Activated CD4-positive, alpha-beta memory T cell treated with anti-CD3 and anti-CD28 coated beads for 36 hours (primary cell): ENCODE measurements at regions of chr6 and their contacts with region 1.

Region 1: GRCh38 chr6:99330159-99330558 is 19.3 kb downstream of the FAXC start:
- DNase-seq: peak; percentile 73
- H3K4me3 Mint-ChIP-seq: no peak overlapping the region
- H3K27ac Mint-ChIP-seq: no peak overlapping the region
- H3K4me1 Mint-ChIP-seq: peaks cover 3% of the 10 kb centered on the region
- H3K27me3 Mint-ChIP-seq: peaks cover 5% of the 10 kb centered on the region

Region 2: GRCh38 chr6:99364026-99364425 is 33.9 kb after region 1 on chr6:
- CTCF ChIA-PET with region 1: interaction called, 5 read pairs
- POLR2A ChIA-PET with region 1: no interaction called
- intact Hi-C with region 1: loop called (anchors 1 kb)
- DNase-seq: peak; percentile 11
- H3K4me3 Mint-ChIP-seq: no peak overlapping the region
- H3K27ac Mint-ChIP-seq: no peak overlapping the region
- H3K4me1 Mint-ChIP-seq: peaks cover 16% of the 10 kb centered on the region
- H3K27me3 Mint-ChIP-seq: peaks cover 21% of the 10 kb centered on the region

Region 3: DNA sequence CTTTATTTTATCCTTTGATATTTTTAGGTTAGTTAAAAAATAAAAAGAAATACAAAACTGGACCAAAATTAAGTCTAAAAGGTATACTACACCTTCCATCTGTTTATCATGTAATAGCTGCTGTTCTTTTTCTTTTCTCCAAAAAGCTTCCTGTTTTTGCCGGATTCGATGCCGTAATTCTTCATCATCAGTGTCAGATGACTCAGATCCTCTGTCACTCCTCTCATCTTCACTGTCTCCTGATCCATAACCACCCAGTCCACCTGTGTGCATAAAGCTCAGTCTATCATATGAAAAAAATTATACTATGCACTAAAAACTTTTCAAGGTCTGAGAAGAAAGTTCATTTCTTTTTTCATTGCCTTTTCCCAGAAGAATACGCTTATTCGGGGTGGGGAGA is 72.3 kb after region 1 on chr6:
- CTCF ChIA-PET with region 1: interaction called, 16 read pairs
- POLR2A ChIA-PET with region 1: no interaction called
- intact Hi-C with region 1: no loop called
- DNase-seq: no peak
- H3K4me3 Mint-ChIP-seq: no peak overlapping the region
- H3K27ac Mint-ChIP-seq: no peak overlapping the region
- H3K4me1 Mint-ChIP-seq: no peaks in the 10 kb centered on the region
- H3K27me3 Mint-ChIP-seq: no peaks in the 10 kb centered on the region

Region 4: GRCh38 chr6:99434702-99435530 is 104.8 kb after region 1 on chr6:
- CTCF ChIA-PET with region 1: interaction called, 19 read pairs
- POLR2A ChIA-PET with region 1: no interaction called
- intact Hi-C with region 1: no loop called
- DNase-seq: no peak
- H3K4me3 Mint-ChIP-seq: no peak overlapping the region
- H3K27ac Mint-ChIP-seq: no peak overlapping the region
- H3K4me1 Mint-ChIP-seq: no peaks in the 10 kb centered on the region
- H3K27me3 Mint-ChIP-seq: no peaks in the 10 kb centered on the region

Region 5: DNA sequence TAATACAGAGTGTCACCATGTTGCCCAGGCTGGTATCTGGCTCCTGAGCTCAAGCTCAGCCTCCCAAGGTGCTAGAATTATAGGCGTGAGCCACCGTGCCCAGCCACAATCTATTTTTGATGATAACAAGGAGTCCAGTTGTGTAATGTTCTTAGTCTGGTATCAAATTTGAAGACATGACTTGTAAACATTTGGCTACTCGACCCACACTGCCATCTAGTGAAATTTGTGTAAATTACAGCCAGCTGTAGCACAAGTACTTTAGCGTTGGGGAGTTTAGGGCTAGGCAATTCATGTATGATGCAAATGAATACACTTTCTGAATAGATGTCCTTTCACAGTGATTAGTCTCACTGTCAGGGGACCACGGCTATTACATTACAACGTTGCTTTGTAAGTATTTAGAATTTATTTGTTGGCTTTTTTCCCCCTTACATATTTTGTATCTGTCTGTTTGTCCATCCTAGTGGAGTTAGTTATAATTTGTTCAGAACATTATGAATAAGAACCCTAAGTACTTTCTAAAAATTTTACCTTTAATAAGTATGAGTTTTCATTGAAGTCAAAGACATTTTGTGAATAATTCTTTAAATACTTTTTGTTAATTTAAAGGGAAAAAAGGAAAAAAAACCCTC is 416.2 kb after region 1 on chr6:
- CTCF ChIA-PET with region 1: interaction called, 7 read pairs
- POLR2A ChIA-PET with region 1: no interaction called
- intact Hi-C with region 1: loop called (anchors 5 kb)
- DNase-seq: peak; percentile 56
- H3K4me3 Mint-ChIP-seq: no peak overlapping the region
- H3K27ac Mint-ChIP-seq: no peak overlapping the region
- H3K4me1 Mint-ChIP-seq: no peaks in the 10 kb centered on the region
- H3K27me3 Mint-ChIP-seq: peaks cover 16% of the 10 kb centered on the region